ENCODE measurements at regions of chr16 and their contacts with region 1.

Region 1: DNA sequence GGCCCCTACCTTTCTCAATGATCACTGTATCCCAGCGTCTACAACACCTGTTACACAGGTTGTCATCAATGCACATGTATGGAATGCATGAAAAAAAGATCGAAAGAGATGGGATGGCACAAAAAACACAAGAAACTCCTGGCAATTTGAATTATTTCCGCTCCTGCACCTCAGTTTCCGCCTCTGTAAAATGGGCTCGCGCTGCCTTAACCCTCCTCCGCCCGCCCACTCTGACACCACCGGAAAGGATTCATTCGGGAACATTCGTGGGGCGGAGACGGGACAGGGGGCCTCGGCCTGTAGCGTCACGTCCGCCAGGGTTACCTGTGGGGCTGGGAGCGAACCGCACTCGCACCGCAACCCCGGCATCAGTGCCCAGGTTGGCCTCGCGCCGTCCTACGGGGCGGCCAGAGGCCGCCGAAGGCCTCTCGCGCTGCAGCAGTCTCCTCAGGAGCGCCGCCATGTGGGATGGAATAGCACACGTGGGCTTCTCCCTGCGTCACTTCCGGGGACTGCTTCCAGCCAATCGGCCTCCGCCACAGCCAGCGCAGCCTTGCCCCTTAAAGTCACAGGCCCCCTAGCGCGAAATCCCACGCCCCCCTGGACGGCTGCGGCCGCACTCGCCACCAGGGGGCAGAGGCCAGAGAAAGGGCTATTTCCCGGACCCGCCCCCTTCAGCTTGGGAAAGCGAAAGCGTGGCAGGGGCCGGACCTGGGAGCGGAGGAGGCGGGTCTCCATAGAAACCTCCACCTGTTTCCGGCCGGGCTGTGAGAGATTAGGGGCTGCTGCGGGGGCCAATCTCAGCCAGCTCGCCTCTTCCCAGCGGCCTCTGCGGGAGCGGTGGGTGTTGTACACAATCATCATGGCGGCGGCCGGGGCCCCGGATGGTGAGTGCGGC is at the starts of genes EARS2 and UBFD1:
- DNase-seq: peak; percentile 96 to 98
- ATAC-seq: peak; percentile 90 to 96 (median 90)
- H3K4me3 ChIP-seq: peak within 1 kb of the TSS; percentile 75
- H3K4me3 Mint-ChIP-seq: peak within 1 kb of the TSS; percentile 95
- H3K27ac ChIP-seq: peak within 1 kb of the TSS; percentile 74
- H3K27ac Mint-ChIP-seq: peak within 1 kb of the TSS; percentile 90 to 94
- H3K4me1 ChIP-seq: peaks cover 19% of the 10 kb centered on the region
- H3K4me1 Mint-ChIP-seq: peaks cover 20 to 28% of the 10 kb centered on the region in 2 donors
- H3K27me3 ChIP-seq: no peaks in the 10 kb centered on the region
- H3K27me3 Mint-ChIP-seq: no peaks in the 10 kb centered on the region
- CTCF ChIP-seq: peak; percentile 71
- total RNA-seq, gene EARS2: 12.1 to 14.2 (median 12.4) TPM
- total RNA-seq, gene UBFD1: 51.4 to 65.8 (median 63.6) TPM

Region 2: DNA sequence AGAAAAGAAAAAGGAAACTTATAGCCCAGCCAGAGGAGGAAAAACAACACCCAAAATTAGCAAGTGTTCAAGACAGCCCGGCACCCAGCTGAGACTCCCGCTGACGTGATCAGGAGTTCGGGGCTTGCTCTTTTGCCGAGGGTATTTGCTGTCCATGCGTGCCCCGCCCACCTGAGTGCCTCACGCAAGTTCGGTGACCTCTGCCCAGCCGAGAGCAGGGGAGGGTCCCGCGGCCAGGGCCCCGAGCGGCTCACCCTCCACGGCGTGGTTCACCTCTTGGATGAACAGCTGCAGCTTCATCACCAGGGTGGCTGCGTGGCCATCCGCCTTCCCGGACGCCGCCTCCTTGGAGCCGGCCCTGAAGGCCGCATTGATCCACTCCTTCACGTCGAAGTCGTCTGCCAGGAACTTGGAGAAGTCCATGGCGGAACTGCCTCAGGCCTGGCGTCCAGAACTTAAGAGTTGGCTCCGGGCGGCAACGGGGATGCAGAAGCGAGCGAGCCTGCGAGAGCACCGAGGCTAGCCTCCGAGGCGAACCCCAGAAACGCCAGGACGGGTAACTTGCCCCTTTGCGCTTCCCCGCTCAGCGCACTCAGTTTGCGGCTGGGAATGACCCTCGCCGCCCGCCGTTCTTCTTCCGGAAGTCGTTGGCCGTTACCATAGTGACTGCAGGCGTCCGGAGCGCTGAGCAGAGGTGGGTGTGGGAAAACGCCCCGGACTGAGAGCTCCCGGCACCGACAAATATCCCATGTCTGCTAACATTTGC is 104.4 kb before region 1 on chr16 and contains the start of gene COG7:
- intact Hi-C with region 1: loop called (anchors 5 kb)
- DNase-seq: peak; percentile 84 to 88
- ATAC-seq: peak; percentile 92 to 96 (median 94)
- H3K4me3 ChIP-seq: peak within 1 kb of the TSS; percentile 92
- H3K4me3 Mint-ChIP-seq: peak within 1 kb of the TSS; percentile 99
- H3K27ac ChIP-seq: peak within 1 kb of the TSS; percentile 45
- H3K27ac Mint-ChIP-seq: peak within 1 kb of the TSS; percentile 81 to 92
- H3K4me1 ChIP-seq: peaks cover 14% of the 10 kb centered on the region
- H3K4me1 Mint-ChIP-seq: peaks cover 36 to 43% of the 10 kb centered on the region in 2 donors
- H3K27me3 ChIP-seq: no peaks in the 10 kb centered on the region
- H3K27me3 Mint-ChIP-seq: no peaks in the 10 kb centered on the region
- CTCF ChIP-seq: no peak
- total RNA-seq, gene COG7: 18.4 to 26.6 (median 20.3) TPM

Region 3: GRCh38 chr16:23504451-23505179 is 52.5 kb before region 1 on chr16:
- intact Hi-C with region 1: loop called (anchors 2 kb)
- DNase-seq: peak; percentile 76 to 85
- ATAC-seq: peak; percentile 84 to 91 (median 91)
- H3K4me3 ChIP-seq: no peak overlapping the region
- H3K4me3 Mint-ChIP-seq: peak overlapping the region; percentile 53
- H3K27ac ChIP-seq: peak overlapping the region; percentile 78
- H3K27ac Mint-ChIP-seq: peak overlapping the region; percentile 87 to 95
- H3K4me1 ChIP-seq: peaks cover 51% of the 10 kb centered on the region
- H3K4me1 Mint-ChIP-seq: peaks cover 64 to 72% of the 10 kb centered on the region in 2 donors
- H3K27me3 ChIP-seq: no peaks in the 10 kb centered on the region
- H3K27me3 Mint-ChIP-seq: no peaks in the 10 kb centered on the region
- CTCF ChIP-seq: no peak

Region 4: GRCh38 chr16:23534868-23535860 is 22.0 kb before region 1 on chr16:
- intact Hi-C with region 1: no loop called
- DNase-seq: no peak
- ATAC-seq: no peak
- H3K4me3 ChIP-seq: no peak overlapping the region
- H3K4me3 Mint-ChIP-seq: no peak overlapping the region
- H3K27ac ChIP-seq: no peak overlapping the region
- H3K27ac Mint-ChIP-seq: no peak overlapping the region
- H3K4me1 ChIP-seq: no peaks in the 10 kb centered on the region
- H3K4me1 Mint-ChIP-seq: no peaks in the 10 kb centered on the region
- H3K27me3 ChIP-seq: no peaks in the 10 kb centered on the region
- H3K27me3 Mint-ChIP-seq: no peaks in the 10 kb centered on the region
- CTCF ChIP-seq: no peak

Region 5: GRCh38 chr16:23595951-23596720 is 39.0 kb after region 1 on chr16 and contains the start of gene NDUFAB1:
- intact Hi-C with region 1: loop called (anchors 1 kb)
- DNase-seq: peak; percentile 92 to 95
- ATAC-seq: peak; percentile 99 to 100 (median 99)
- H3K4me3 ChIP-seq: peak within 1 kb of the TSS; percentile 87
- H3K4me3 Mint-ChIP-seq: peak within 1 kb of the TSS; percentile 81
- H3K27ac ChIP-seq: peak within 1 kb of the TSS; percentile 69
- H3K27ac Mint-ChIP-seq: peak within 1 kb of the TSS; percentile 18 to 75
- H3K4me1 ChIP-seq: peaks cover 25% of the 10 kb centered on the region
- H3K4me1 Mint-ChIP-seq: peaks cover 12 to 32% of the 10 kb centered on the region in 2 donors
- H3K27me3 ChIP-seq: no peaks in the 10 kb centered on the region
- H3K27me3 Mint-ChIP-seq: no peaks in the 10 kb centered on the region
- CTCF ChIP-seq: peak; percentile 97
- total RNA-seq, gene NDUFAB1: 27.3 to 30.5 (median 28.3) TPM

Region 6: DNA sequence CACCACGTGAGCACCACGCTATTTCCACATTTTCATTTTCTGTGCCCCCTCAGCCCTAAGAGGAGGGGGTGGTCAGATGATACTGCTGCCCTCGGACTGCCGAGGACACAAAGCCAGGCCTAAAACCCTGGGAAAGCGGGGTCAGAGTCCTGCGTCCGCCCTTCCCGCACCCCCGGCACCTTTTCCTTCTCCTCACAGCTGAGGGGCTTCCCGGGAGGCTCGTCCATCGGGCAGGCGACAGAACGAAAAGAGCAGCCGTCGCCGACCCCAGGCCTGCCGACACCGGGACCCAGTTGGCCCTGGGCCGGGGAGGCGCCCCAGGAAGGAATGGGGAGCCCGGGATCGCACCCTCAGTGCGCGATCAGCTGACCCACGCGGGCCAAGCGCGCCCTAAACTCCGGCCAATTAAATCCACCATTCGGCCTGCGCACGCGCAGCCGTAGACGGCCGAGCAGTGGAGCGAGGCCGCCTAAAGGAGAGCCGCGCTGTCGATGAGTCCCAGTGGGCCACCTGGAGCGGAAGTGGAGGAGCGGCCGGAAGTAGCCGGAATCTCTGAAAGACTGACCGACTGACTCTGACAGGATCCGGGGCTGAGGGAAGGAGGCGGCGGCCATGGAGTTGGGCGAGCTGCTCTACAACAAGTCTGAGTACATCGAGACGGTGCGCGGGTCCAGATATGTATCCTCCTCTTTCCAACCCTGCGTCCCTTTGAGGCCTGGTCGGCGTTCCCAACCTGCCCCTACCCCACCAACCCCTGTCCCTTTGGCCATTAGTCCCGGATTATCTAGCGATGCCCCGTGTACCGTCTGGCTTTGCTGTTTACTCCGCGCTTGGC is 84.0 kb after region 1 on chr16 and contains the starts of genes DCTN5 and PALB2:
- intact Hi-C with region 1: loop called (anchors 1 kb)
- DNase-seq: peak; percentile 79 to 90
- ATAC-seq: peak; percentile 96 to 99 (median 98)
- H3K4me3 ChIP-seq: peak within 1 kb of the TSS; percentile 66
- H3K4me3 Mint-ChIP-seq: peak within 1 kb of the TSS; percentile 98
- H3K27ac ChIP-seq: peak within 1 kb of the TSS; percentile 65
- H3K27ac Mint-ChIP-seq: peak within 1 kb of the TSS; percentile 90 to 96
- H3K4me1 ChIP-seq: peaks cover 26% of the 10 kb centered on the region
- H3K4me1 Mint-ChIP-seq: peaks cover 39 to 40% of the 10 kb centered on the region in 2 donors
- H3K27me3 ChIP-seq: no peaks in the 10 kb centered on the region
- H3K27me3 Mint-ChIP-seq: no peaks in the 10 kb centered on the region
- CTCF ChIP-seq: no peak
- total RNA-seq, gene DCTN5: 60.7 to 72.1 (median 65.8) TPM
- total RNA-seq, gene PALB2: 10.7 to 12.8 (median 10.9) TPM